Ascending aorta (tissue), 2 donors: ENCODE measurements at regions of chr7 and their contacts with region 1.

Region 1: DNA sequence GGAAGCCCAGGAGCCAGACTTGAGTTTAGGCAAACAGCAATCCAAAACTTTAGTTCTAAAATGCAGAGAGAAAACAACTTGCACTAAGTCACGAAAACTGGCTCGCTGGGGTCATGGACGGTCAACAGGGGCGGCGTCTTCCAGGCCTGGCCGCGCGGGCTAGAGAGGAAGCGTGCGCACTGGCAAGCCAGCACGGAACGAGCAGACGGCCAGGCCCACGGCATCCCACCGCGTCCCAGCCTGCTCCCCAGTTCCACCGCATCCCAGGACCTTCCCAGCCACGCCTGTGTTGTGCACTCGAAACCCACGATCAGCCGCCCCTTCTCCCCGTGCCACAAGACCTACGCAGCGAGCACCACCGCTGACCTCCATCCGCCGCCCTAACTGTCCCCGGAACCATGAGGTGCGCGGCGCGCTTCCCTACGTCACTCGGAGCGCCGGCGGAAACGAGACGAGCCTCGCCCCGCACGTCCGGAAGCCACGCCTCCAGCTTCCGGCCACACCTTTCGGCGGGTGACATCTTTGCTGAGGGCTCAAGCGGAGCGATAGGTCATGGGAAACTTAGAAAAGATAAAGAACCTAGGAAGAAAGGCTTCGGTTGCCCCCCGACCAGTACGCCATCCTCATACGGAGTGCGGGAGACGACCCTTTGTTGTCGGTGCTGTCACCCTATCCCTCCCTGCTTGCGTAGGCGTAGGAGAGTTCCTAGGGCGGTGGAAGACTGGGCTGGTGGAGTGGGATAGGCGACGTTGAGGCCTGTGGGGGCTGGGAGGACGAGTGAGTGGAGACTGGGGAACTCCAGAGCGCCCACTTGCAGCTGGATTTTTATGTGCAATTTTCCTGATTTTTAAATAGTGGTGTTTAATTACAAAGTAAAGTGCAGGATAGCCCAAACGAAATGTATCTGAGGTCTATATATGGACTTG is at the start of gene TBRG4:
- DNase-seq: peak; percentile 68 to 96
- H3K4me3 ChIP-seq: peak within 1 kb of the TSS; percentile 82 to 85
- H3K27ac ChIP-seq: peak within 1 kb of the TSS; percentile 89 to 95
- H3K4me1 ChIP-seq: peaks cover 0 to 15% of the 10 kb centered on the region in 2 donors
- H3K27me3 ChIP-seq: no peaks in the 10 kb centered on the region
- CTCF ChIP-seq: peak in 2 of 3 experiments; percentile 35 to 48
- total RNA-seq, gene TBRG4: 216 TPM

Region 2: DNA sequence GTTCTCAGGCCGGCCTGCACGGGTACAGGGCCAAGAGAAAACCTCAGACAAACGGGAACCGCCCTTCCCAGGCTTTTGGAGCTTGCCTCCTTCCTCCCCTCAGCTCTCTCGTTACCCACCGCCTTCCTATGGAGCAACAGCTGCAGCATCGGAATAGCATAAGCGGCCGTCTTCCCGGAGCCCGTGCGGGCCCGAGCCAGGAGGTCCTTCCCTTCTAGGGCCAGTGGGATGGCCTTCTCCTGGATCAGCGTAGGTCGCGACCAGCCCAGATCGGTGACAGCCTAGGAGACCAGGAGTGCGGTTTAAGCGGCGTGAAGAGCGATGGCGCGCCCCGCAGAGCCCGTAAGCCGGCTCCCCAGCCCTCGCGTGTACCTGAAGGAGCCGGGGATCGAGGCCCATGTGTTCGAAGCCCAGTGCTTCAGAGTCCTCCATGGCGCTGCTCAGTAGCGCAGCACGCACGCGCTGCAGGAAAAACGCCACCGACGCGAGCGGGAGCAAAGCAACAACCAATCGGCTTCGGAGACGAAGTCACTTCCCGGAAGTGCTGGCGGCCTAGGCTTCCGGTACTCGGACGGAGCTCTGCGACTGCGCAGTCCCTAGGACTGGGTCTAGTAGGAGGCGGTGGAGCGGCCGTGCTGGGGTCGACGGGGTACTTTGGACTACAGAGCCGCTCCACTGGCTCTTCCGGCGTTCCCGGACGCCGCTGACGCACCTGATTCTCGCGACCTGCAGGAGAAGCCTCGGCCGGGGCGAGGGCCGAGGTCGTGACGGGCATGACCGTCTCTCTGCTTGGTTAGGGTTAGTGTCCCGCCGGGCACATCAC is 537.9 kb before region 1 on chr7 and contains the start of gene DDX56:
- intact Hi-C with region 1: loop called (anchors 10 kb)
- DNase-seq: peak; percentile 64 to 96
- H3K4me3 ChIP-seq: peak within 1 kb of the TSS; percentile 87 to 97
- H3K27ac ChIP-seq: peak within 1 kb of the TSS; percentile 89 to 95
- H3K4me1 ChIP-seq: peaks cover 8 to 18% of the 10 kb centered on the region in 2 donors
- H3K27me3 ChIP-seq: no peaks in the 10 kb centered on the region
- CTCF ChIP-seq: no peak
- total RNA-seq, gene DDX56: 51.0 TPM

Region 3: GRCh38 chr7:44606450-44607254 is 504.9 kb before region 1 on chr7 and contains the start of gene OGDH:
- intact Hi-C with region 1: loop called (anchors 1 kb)
- DNase-seq: peak; percentile 95 to 99
- H3K4me3 ChIP-seq: peak within 1 kb of the TSS; percentile 70 to 85
- H3K27ac ChIP-seq: peak within 1 kb of the TSS; percentile 95 to 99
- H3K4me1 ChIP-seq: peaks cover 0 to 7% of the 10 kb centered on the region in 2 donors
- H3K27me3 ChIP-seq: no peaks in the 10 kb centered on the region
- CTCF ChIP-seq: no peak
- total RNA-seq, gene OGDH: 117 TPM

Region 4: GRCh38 chr7:44986218-44987053 is 125.1 kb before region 1 on chr7:
- intact Hi-C with region 1: loop called (anchors 1 kb)
- DNase-seq: peak; percentile 58 to 96
- H3K4me3 ChIP-seq: peak overlapping the region; percentile 68
- H3K27ac ChIP-seq: peak overlapping the region; percentile 89 to 90
- H3K4me1 ChIP-seq: peaks cover 6 to 12% of the 10 kb centered on the region in 2 donors
- H3K27me3 ChIP-seq: no peaks in the 10 kb centered on the region
- CTCF ChIP-seq: no peak

Region 5: DNA sequence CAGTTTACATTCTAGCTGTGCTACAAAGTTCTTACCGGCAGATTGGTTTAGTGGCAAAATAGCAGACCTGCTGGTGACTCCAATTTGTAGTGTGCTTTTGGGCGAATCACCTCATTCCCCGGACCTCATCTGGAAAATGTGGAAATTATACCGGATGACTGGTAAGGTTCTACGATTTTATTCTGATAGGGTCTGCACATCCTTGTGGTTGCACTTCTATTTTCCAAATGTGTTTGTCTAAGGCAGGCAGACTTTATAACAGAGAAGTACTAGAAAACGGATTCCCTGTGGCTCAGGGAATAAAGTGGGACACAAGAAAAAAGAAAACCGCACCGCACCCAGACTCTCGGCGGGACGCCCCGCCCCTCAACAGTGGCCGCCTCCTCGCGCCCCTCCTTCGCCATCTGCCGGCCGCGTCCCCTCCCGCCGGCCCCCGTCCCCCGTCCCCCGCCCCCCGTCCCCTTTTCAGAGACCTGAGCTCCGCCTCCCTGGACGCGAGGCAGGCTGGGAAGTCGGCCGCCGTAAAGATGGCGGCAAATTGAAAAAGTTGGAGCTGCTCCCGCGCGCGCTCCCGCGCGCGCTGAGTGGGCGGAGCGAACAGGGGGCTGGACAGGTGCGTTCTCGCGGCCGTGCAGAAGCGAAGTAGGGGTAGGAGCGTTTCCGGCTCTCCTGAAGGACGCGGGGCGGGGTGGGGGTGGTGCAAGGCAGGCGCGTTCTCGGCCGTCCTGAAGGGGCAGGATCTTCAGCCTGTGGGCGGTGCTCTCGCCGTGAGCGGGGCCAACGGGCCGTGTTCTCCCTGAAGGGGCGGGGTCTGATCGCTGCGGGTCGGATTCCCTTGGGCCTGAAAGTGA is 112.1 kb before region 1 on chr7:
- intact Hi-C with region 1: loop called (anchors 1 kb)
- DNase-seq: peak; percentile 98 to 100
- H3K4me3 ChIP-seq: peak overlapping the region; percentile 87 to 96
- H3K27ac ChIP-seq: peak overlapping the region; percentile 78 to 96
- H3K4me1 ChIP-seq: peaks cover 0 to 18% of the 10 kb centered on the region in 2 donors
- H3K27me3 ChIP-seq: no peaks in the 10 kb centered on the region
- CTCF ChIP-seq: peak in 1 of 3 experiments; percentile 26

Region 6: DNA sequence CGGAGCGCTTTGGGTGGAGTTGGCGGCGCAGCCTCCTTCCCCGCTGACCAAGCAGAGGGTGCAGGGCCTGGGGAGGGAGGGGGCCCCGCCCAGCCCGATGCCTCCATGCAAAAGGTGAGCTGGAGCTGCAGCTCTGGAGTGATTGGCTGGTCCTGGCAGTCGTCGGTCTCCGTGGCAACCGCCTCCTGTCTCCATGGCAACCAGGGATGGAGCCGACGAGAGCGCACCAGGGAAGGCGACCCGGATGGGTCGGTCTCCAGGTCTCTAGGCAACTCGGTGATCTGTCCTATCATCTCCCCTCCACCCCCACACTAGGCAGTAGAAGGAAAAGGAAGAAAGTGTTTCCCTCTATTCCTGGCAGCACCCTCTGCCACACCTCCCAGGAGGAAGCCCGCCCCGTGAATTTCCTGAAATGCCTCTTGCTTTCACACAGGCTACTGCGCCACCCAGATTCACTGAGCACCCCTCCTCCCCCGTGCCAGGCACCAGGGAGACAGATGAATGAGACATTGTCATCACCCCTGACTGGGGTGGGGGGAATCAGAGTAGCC is 22.1 kb before region 1 on chr7:
- intact Hi-C with region 1: loop called (anchors 1 kb)
- DNase-seq: peak in 1 of 2 donors; percentile 83
- H3K4me3 ChIP-seq: peak overlapping the region; percentile 80 to 91
- H3K27ac ChIP-seq: peak overlapping the region; percentile 89 to 92
- H3K4me1 ChIP-seq: peaks cover 3 to 11% of the 10 kb centered on the region in 2 donors
- H3K27me3 ChIP-seq: no peaks in the 10 kb centered on the region
- CTCF ChIP-seq: no peak